ENCODE measurements at regions of chr15 and their contacts with region 1.

Region 1: GRCh38 chr15:60840306-60840702 is 361.4 kb upstream of the ICE2 start:
- DNase-seq: peak in 4 of 14 experiments; percentile 25 to 61 (median 46)
- ATAC-seq: no peak
- H3K4me3 ChIP-seq: peak overlapping the region; percentile 59
- H3K4me3 Mint-ChIP-seq: peak overlapping the region; percentile 80
- H3K27ac ChIP-seq: peak overlapping the region; percentile 59 to 86
- H3K27ac Mint-ChIP-seq: peak overlapping the region; percentile 84
- H3K4me1 ChIP-seq: peaks cover 78% of the 10 kb centered on the region
- H3K4me1 Mint-ChIP-seq: peaks cover 97% of the 10 kb centered on the region
- H3K27me3 ChIP-seq: no peaks in the 10 kb centered on the region
- H3K27me3 Mint-ChIP-seq: no peaks in the 10 kb centered on the region
- CTCF ChIP-seq: no peak

Region 2: DNA sequence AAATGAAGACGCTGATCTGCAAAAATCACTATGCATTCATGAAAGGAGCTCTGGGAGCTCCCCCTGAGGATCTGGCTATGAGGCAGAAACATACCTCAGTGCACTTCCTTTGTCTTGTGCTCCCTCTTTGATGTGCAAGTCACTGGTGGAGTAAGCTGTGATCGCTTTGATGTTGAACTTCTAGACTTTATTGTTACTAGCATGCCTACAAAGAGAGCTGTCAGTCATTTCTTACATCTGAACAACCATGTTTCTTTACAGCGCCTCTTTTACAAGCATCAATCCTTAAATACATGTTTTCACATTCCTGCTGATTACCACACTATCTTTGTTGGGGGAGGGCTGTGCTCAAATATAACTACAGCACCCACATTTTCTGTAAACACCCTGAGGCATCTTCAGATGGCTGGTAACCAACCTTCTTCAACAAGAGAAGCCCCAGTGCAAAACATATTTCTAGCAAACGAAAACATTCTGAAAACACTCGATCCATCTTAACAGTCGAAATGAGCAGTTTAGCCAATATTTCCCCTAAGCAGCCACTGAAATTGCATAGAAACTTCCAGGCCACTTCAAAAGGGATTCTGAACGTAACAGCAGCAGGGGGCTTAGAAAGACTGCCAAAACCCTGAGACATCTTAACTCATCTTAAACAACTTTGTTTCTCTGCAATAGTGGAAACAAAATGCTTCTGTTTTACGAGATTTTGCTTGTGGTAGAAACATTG is 259.5 kb before region 1 on chr15:
- CTCF ChIA-PET with region 1: interaction called, 6 read pairs
- POLR2A ChIA-PET with region 1: interaction called, 12 read pairs
- intact Hi-C with region 1: loop called in 1 of 2 experiments (anchors 2 kb)
- DNase-seq: peak in 9 of 14 experiments; percentile 32 to 92 (median 60)
- ATAC-seq: peak; percentile 83
- H3K4me3 ChIP-seq: peak overlapping the region; percentile 10
- H3K4me3 Mint-ChIP-seq: peak overlapping the region; percentile 56
- H3K27ac ChIP-seq: peak overlapping the region; percentile 62 to 76
- H3K27ac Mint-ChIP-seq: peak overlapping the region; percentile 85
- H3K4me1 ChIP-seq: peaks cover 61% of the 10 kb centered on the region
- H3K4me1 Mint-ChIP-seq: peaks cover 90% of the 10 kb centered on the region
- H3K27me3 ChIP-seq: no peaks in the 10 kb centered on the region
- H3K27me3 Mint-ChIP-seq: no peaks in the 10 kb centered on the region
- CTCF ChIP-seq: no peak

Region 3: GRCh38 chr15:60720493-60721256 is 119.6 kb before region 1 on chr15:
- CTCF ChIA-PET with region 1: no interaction called
- POLR2A ChIA-PET with region 1: interaction called, 37 read pairs
- intact Hi-C with region 1: loop called (anchors 2 to 5 kb)
- DNase-seq: peak; percentile 13 to 72 (median 34)
- ATAC-seq: peak; percentile 78
- H3K4me3 ChIP-seq: peak overlapping the region; percentile 30
- H3K4me3 Mint-ChIP-seq: peak overlapping the region; percentile 78
- H3K27ac ChIP-seq: peak overlapping the region; percentile 44 to 72
- H3K27ac Mint-ChIP-seq: peak overlapping the region; percentile 86
- H3K4me1 ChIP-seq: peaks cover 48% of the 10 kb centered on the region
- H3K4me1 Mint-ChIP-seq: peaks cover 69% of the 10 kb centered on the region
- H3K27me3 ChIP-seq: no peaks in the 10 kb centered on the region
- H3K27me3 Mint-ChIP-seq: no peaks in the 10 kb centered on the region
- CTCF ChIP-seq: no peak

Region 4: DNA sequence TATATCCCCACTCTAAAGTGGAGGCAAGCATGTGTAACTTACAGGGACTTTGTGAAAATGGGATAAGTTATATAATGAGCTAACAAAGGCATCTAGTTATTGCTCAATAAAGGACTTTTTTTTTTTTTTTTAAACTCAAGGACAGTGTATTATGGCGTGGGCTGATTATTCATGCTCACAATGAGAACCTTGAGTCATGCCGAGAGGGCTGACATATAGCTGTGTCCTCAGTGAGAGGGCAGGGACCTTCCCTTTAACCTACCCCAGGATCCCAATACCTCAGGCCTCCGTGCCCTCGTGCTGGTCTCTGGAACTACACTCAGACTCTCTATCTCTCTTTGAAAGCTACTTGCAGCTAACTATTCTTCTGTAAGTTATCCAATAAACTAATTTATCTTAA is 41.5 kb before region 1 on chr15:
- CTCF ChIA-PET with region 1: interaction called, 5 read pairs
- POLR2A ChIA-PET with region 1: interaction called, 14 read pairs
- intact Hi-C with region 1: loop called in 1 of 2 experiments (anchors 5 kb)
- DNase-seq: peak in 3 of 14 experiments; percentile 36 to 64 (median 38)
- ATAC-seq: peak; percentile 25
- H3K4me3 ChIP-seq: no peak overlapping the region
- H3K4me3 Mint-ChIP-seq: peak overlapping the region; percentile 5
- H3K27ac ChIP-seq: peak overlapping the region; percentile 15 to 76
- H3K27ac Mint-ChIP-seq: peak overlapping the region; percentile 90
- H3K4me1 ChIP-seq: peaks cover 81% of the 10 kb centered on the region
- H3K4me1 Mint-ChIP-seq: peaks cover 91% of the 10 kb centered on the region
- H3K27me3 ChIP-seq: no peaks in the 10 kb centered on the region
- H3K27me3 Mint-ChIP-seq: no peaks in the 10 kb centered on the region
- CTCF ChIP-seq: no peak

Region 5: GRCh38 chr15:60859996-60860494 is 19.7 kb after region 1 on chr15:
- CTCF ChIA-PET with region 1: interaction called, 4 read pairs
- POLR2A ChIA-PET with region 1: interaction called, 16 read pairs
- intact Hi-C with region 1: no loop called
- DNase-seq: peak in 1 of 14 experiments; percentile 46
- ATAC-seq: no peak
- H3K4me3 ChIP-seq: no peak overlapping the region
- H3K4me3 Mint-ChIP-seq: no peak overlapping the region
- H3K27ac ChIP-seq: no peak overlapping the region
- H3K27ac Mint-ChIP-seq: no peak overlapping the region
- H3K4me1 ChIP-seq: no peaks in the 10 kb centered on the region
- H3K4me1 Mint-ChIP-seq: peaks cover 41% of the 10 kb centered on the region
- H3K27me3 ChIP-seq: no peaks in the 10 kb centered on the region
- H3K27me3 Mint-ChIP-seq: no peaks in the 10 kb centered on the region
- CTCF ChIP-seq: no peak

Region 6: GRCh38 chr15:60905587-60905986 is 65.3 kb after region 1 on chr15:
- CTCF ChIA-PET with region 1: no interaction called
- POLR2A ChIA-PET with region 1: interaction called, 3 read pairs
- intact Hi-C with region 1: loop called in 1 of 2 experiments (anchors 5 kb)
- DNase-seq: peak in 13 of 14 experiments; percentile 6 to 70 (median 32)
- ATAC-seq: peak; percentile 81
- H3K4me3 ChIP-seq: no peak overlapping the region
- H3K4me3 Mint-ChIP-seq: no peak overlapping the region
- H3K27ac ChIP-seq: no peak overlapping the region
- H3K27ac Mint-ChIP-seq: no peak overlapping the region
- H3K4me1 ChIP-seq: no peaks in the 10 kb centered on the region
- H3K4me1 Mint-ChIP-seq: peaks cover 3% of the 10 kb centered on the region
- H3K27me3 ChIP-seq: no peaks in the 10 kb centered on the region
- H3K27me3 Mint-ChIP-seq: no peaks in the 10 kb centered on the region
- CTCF ChIP-seq: peak; percentile 47